ENCODE measurements at regions of chr19 and their contacts with region 1.

Region 1: GRCh38 chr19:7868676-7869452 is 5.3 kb downstream of the PRR36 start:
- DNase-seq: peak; percentile 95
- ATAC-seq: peak; percentile 41
- H3K4me3 Mint-ChIP-seq: peak overlapping the region; percentile 63
- H3K27ac Mint-ChIP-seq: peak overlapping the region; percentile 78; the same call in 1 of the 2 replicates
- H3K4me1 Mint-ChIP-seq: peaks cover 28% of the 10 kb centered on the region
- H3K27me3 Mint-ChIP-seq: peaks cover 62% of the 10 kb centered on the region
- CTCF ChIP-seq: peak; percentile 77

Region 2: DNA sequence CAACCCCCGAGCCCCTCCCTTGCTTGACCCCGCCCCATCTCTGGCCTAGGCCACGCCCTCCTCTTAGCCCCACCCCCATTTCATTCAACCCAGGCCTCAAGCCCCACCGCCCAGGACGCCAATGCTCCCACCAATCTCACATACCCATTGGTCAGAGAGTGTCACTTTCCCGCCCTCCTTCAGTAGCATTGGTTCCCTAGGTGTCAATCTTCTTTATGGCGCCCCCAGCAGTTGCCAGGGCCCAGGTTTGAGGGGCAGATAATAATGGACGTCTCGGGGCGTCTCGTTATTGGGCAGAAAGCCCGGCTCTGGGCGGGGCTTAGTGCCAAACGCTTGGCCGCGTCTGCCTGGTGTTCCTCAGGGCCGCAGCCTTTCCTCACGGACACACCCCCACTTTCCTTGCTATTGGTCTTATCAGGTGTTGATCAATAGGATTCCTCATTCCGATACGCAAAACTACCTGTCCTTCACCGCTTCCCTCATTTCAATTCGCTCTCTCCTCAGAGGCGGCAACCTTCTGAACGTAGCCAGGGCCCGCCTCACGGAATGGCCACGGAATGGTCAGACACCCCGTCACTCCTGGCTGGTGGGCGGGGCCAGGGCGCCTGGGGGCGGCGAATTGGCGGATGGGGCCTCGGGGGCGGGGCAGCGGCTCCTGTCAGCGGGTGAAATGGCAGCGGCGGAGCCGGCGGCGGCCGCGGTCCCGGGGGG is 39.1 kb before region 1 on chr19 and contains the start of gene EVI5L:
- CTCF ChIA-PET with region 1: interaction called, 19 read pairs
- POLR2A ChIA-PET with region 1: interaction called, 9 read pairs
- DNase-seq: peak; percentile 99
- ATAC-seq: peak; percentile 92
- H3K4me3 Mint-ChIP-seq: peak within 1 kb of the TSS; percentile 91
- H3K27ac Mint-ChIP-seq: no peak within 1 kb of the TSS
- H3K4me1 Mint-ChIP-seq: peaks cover 14% of the 10 kb centered on the region
- H3K27me3 Mint-ChIP-seq: peaks cover 55% of the 10 kb centered on the region
- CTCF ChIP-seq: no peak
- total RNA-seq, gene EVI5L: 10.5 to 13.7 TPM (median 13.6 TPM) in 3 replicates

Region 3: DNA sequence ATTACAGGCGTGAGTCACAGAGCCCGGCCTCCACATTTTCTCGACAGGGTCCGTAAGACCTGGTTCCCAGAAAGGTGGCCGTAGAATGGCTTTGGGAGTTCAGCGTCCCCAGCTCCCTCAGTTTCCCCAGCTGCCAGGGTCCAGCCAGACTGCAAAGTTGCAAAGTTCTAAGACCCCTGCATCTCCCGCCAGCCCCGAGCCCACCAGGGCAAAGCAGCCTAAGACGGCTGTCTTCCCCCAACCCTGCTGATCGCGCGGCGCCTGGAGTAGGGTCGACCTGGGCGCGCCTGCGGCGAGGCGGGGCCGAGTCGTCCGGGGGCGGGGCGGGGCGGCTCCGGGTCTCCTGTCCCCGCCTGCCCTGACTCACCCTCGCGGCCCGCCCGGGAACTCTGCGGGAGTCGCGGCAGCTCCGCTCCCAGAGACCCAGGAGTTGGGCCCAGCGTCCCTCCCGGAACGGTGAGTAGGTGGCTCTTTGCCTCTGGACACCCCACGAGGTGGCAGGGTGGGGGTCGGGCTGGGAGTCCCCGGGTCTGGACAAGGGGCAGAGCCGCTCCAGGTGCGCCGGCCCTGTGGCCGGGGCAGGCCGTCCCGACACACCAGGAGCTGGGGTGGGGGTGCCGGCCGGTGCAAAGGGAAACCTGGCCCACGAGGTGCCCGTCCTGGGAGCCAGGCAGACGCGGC is 19.4 kb after region 1 on chr19 and contains the start of gene LRRC8E:
- CTCF ChIA-PET with region 1: interaction called, 30 read pairs
- POLR2A ChIA-PET with region 1: no interaction called
- DNase-seq: peak; percentile 87
- ATAC-seq: peak; percentile 97
- H3K4me3 Mint-ChIP-seq: peak within 1 kb of the TSS; percentile 65
- H3K27ac Mint-ChIP-seq: no peak within 1 kb of the TSS
- H3K4me1 Mint-ChIP-seq: peaks cover 3% of the 10 kb centered on the region
- H3K27me3 Mint-ChIP-seq: peaks cover 56% of the 10 kb centered on the region
- CTCF ChIP-seq: no peak
- total RNA-seq, gene LRRC8E: 3.0 to 3.6 TPM (median 3.1 TPM) in 3 replicates

Region 4: GRCh38 chr19:7908742-7909461 is 40.0 kb after region 1 on chr19:
- CTCF ChIA-PET with region 1: interaction called, 70 read pairs
- POLR2A ChIA-PET with region 1: interaction called, 10 read pairs
- DNase-seq: no peak
- ATAC-seq: peak; percentile 47
- H3K4me3 Mint-ChIP-seq: no peak overlapping the region
- H3K27ac Mint-ChIP-seq: no peak overlapping the region
- H3K4me1 Mint-ChIP-seq: peaks cover 12% of the 10 kb centered on the region
- H3K27me3 Mint-ChIP-seq: no peaks in the 10 kb centered on the region; the same call in 1 of the 2 replicates
- CTCF ChIP-seq: no peak

Region 5: GRCh38 chr19:7928736-7929701 is 60.2 kb after region 1 on chr19:
- CTCF ChIA-PET with region 1: interaction called, 24 read pairs
- POLR2A ChIA-PET with region 1: no interaction called
- DNase-seq: peak; percentile 84
- ATAC-seq: peak; percentile 63
- H3K4me3 Mint-ChIP-seq: no peak overlapping the region
- H3K27ac Mint-ChIP-seq: peak overlapping the region; percentile 70; the same call in 1 of the 2 replicates
- H3K4me1 Mint-ChIP-seq: peaks cover 4% of the 10 kb centered on the region; the same call in 1 of the 2 replicates
- H3K27me3 Mint-ChIP-seq: no peaks in the 10 kb centered on the region
- CTCF ChIP-seq: peak; percentile 71